MCF 10A (cell line): ENCODE measurements at regions of chr20 and their contacts with region 1.

Region 1: DNA sequence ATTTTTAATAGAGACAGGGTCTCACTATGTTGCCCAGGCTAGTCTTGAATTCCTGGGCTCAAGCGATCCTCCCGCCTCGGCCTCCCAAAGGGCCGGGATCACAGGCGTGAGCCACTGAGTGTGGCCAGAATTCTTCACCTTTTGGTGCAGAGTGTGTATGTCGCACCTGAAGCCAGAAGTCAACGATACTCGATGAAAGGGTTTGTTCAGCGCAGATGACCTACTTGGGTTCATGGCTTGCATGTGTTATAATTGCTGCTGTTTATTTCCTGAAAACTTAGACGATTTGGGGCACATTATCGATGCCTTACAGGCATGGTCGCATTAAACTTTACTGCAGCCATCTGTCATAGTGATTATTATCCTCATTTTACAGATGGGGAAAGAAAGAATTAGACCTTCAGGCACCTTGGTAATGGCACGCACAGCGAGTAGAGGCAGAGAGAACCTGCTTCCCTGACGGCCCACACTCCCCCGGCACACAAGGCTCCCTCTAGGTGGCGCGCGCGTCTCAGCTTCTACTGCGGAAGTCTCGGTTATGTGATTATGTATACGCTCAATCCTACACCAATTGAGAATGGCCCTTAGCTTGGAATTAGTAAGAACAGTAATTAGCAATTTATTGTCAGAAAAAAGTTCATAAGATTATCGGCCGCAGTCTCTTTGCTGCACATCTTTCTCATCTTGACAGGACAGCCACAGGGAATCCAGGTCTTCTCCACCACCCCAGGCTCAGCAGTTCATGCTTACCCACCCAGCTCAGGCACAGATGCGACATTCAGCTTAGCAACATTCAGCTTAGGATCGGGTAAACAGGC is 212.8 kb upstream of the PROKR2 start:
- DNase-seq: peak; percentile 85
- H3K4me3 Mint-ChIP-seq: no peak overlapping the region
- H3K27ac Mint-ChIP-seq: peak overlapping the region; percentile 23
- H3K4me1 Mint-ChIP-seq: peaks cover 34% of the 10 kb centered on the region
- H3K27me3 Mint-ChIP-seq: peaks cover 12% of the 10 kb centered on the region
- CTCF ChIP-seq: peak; percentile 71

Region 2: GRCh38 chr20:5205348-5206210 is 324.0 kb before region 1 on chr20:
- CTCF ChIA-PET with region 1: interaction called, 4 read pairs
- POLR2A ChIA-PET with region 1: no interaction called
- intact Hi-C with region 1: loop called (anchors 2 kb)
- DNase-seq: peak; percentile 70
- H3K4me3 Mint-ChIP-seq: no peak overlapping the region
- H3K27ac Mint-ChIP-seq: no peak overlapping the region
- H3K4me1 Mint-ChIP-seq: no peaks in the 10 kb centered on the region
- H3K27me3 Mint-ChIP-seq: no peaks in the 10 kb centered on the region
- CTCF ChIP-seq: peak; percentile 88

Region 3: DNA sequence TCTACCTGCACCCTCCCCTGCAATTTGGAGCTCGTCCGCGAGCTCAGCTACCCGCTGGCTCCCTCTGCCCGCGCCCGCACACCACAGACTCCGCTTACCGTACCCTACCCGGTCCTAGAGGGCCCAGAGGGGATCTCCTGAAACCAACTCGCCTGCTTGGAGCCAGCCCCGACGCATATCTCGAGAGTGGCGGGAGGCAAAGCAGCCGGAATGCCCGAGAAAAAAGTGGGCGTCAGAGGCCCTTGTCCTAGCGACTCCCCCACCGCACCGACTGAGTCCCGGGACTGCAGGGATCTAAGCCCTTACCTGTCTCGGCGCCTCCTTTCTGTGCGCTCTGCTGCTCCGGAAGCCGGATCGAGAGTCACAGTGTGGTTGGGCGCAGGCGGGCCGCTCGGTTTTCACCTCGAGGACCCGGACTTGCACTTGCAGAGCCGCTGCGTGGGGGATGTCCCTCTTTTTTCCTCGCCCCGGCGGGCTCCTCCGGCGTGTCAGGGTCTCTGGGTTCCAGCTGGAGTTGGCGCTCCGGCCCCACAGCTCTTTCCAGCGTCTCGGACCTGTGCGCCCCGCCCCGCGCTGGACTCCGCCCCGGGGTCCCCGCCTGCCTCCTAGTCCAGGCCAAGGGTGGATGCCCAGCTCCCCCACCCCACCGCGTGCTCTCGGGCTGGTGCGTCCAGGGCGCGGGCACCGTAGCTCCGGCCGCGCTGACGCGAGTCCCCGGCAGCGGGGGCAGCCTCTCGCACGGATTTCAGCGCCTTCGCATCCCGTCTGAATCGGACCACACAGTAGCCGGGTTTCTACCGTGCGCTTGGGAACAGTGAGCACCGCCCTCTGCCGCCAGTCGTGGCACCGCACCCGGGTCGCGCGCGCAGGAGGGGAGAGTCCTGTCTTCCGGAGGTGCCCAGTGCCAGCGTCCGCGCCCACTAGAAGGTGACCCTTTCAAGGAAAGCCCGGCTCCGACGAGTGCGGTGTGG is 213.1 kb before region 1 on chr20 and contains the start of gene PROKR2:
- CTCF ChIA-PET with region 1: no interaction called
- POLR2A ChIA-PET with region 1: no interaction called
- intact Hi-C with region 1: no loop called
- DNase-seq: no peak
- H3K4me3 Mint-ChIP-seq: no peak within 1 kb of the TSS
- H3K27ac Mint-ChIP-seq: no peak within 1 kb of the TSS
- H3K4me1 Mint-ChIP-seq: no peaks in the 10 kb centered on the region
- H3K27me3 Mint-ChIP-seq: peaks cover 79% of the 10 kb centered on the region
- CTCF ChIP-seq: no peak
- total RNA-seq, gene PROKR2: not detected in 2 replicates

Region 4: DNA sequence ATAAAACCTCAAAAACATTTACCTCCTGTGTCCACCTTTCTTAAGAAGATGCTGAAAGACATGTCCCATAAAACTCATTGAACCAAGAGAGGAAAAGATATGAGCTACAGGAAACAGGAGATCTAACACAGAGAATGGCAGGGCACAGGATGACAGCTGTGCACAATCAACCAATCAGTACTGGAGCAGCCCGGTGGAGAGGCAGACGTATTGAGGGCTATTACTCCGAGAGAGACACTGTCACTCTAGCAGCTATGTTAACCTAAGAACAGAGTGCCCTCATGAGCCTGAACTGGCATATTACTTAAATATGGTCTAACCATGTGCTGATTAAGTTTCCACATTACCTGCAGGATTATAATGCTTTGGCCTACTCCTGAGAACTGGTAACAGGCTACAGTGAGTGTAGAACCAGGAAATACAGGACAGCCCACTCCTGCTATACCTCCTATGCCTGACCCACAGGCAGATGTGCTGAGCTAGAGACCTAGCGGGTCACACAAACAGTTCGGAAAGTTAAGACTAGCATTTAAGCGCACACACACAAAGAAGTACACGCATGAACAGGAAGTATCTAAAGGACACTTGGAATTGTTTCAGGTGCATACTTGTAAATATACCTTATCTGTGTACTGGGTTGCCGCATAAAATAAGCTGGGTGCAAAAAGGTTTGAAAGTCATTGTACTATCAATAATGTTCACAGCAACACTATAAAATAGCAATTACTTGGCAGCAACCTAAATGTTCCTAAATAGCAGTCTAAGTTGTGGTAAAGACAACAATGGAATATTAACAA is 21.4 kb after region 1 on chr20:
- CTCF ChIA-PET with region 1: interaction called, 51 read pairs
- POLR2A ChIA-PET with region 1: interaction called, 8 read pairs
- intact Hi-C with region 1: loop called (anchors 2 kb)
- DNase-seq: no peak
- H3K4me3 Mint-ChIP-seq: no peak overlapping the region
- H3K27ac Mint-ChIP-seq: no peak overlapping the region
- H3K4me1 Mint-ChIP-seq: peaks cover 6% of the 10 kb centered on the region
- H3K27me3 Mint-ChIP-seq: no peaks in the 10 kb centered on the region
- CTCF ChIP-seq: no peak

Region 5: GRCh38 chr20:5569021-5569420 is 39.5 kb after region 1 on chr20:
- CTCF ChIA-PET with region 1: interaction called, 27 read pairs
- POLR2A ChIA-PET with region 1: interaction called, 3 read pairs
- intact Hi-C with region 1: no loop called
- DNase-seq: peak; percentile 67
- H3K4me3 Mint-ChIP-seq: no peak overlapping the region
- H3K27ac Mint-ChIP-seq: no peak overlapping the region
- H3K4me1 Mint-ChIP-seq: peaks cover 6% of the 10 kb centered on the region
- H3K27me3 Mint-ChIP-seq: no peaks in the 10 kb centered on the region
- CTCF ChIP-seq: peak; percentile 57

Region 6: DNA sequence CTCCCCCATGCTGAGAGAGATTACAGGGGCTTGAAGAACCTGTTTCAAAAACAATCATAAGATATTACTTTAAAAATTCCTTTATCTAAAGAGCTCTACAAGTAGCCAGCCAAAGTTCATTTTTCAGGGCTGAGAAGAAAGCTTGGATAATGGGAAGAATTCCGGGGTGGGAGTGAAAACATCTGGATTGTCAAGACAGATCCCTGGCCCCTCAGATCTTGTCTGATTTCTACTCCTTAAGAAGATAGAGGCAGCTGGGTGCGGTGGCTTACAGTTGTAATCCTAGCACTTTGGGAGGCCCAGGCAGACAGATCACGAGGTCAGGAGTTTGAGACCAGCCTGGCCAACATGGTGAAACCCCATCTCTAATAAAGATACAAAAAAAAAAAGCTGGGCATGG is 396.0 kb after region 1 on chr20:
- CTCF ChIA-PET with region 1: interaction called, 11 read pairs
- POLR2A ChIA-PET with region 1: interaction called, 4 read pairs
- intact Hi-C with region 1: no loop called
- DNase-seq: no peak
- H3K4me3 Mint-ChIP-seq: no peak overlapping the region
- H3K27ac Mint-ChIP-seq: no peak overlapping the region
- H3K4me1 Mint-ChIP-seq: no peaks in the 10 kb centered on the region
- H3K27me3 Mint-ChIP-seq: no peaks in the 10 kb centered on the region
- CTCF ChIP-seq: no peak

Region 7: GRCh38 chr20:5950271-5951031 is 420.9 kb after region 1 on chr20 and contains the starts of genes MCM8 and TRMT6:
- CTCF ChIA-PET with region 1: interaction called, 8 read pairs
- POLR2A ChIA-PET with region 1: interaction called, 5 read pairs
- intact Hi-C with region 1: loop called (anchors 5 kb)
- DNase-seq: peak; percentile 96
- H3K4me3 Mint-ChIP-seq: peak within 1 kb of the TSS; percentile 99
- H3K27ac Mint-ChIP-seq: peak within 1 kb of the TSS; percentile 59
- H3K4me1 Mint-ChIP-seq: peaks cover 22% of the 10 kb centered on the region
- H3K27me3 Mint-ChIP-seq: no peaks in the 10 kb centered on the region
- CTCF ChIP-seq: no peak
- total RNA-seq, gene MCM8: 8.0 and 12.4 TPM in 2 replicates
- total RNA-seq, gene TRMT6: 31.0 and 44.9 TPM in 2 replicates

Region 8: GRCh38 chr20:6074145-6074561 is 544.6 kb after region 1 on chr20:
- CTCF ChIA-PET with region 1: interaction called, 15 read pairs
- POLR2A ChIA-PET with region 1: no interaction called
- intact Hi-C with region 1: no loop called
- DNase-seq: peak; percentile 20
- H3K4me3 Mint-ChIP-seq: no peak overlapping the region
- H3K27ac Mint-ChIP-seq: peak overlapping the region; percentile 32
- H3K4me1 Mint-ChIP-seq: no peaks in the 10 kb centered on the region
- H3K27me3 Mint-ChIP-seq: no peaks in the 10 kb centered on the region
- CTCF ChIP-seq: no peak